GM12878 (cell line): ENCODE measurements at regions of chr5 and their contacts with region 1.

Region 1: GRCh38 chr5:109688971-109689739 is 572 bp upstream of the MAN2A1 start:
- DNase-seq: peak; percentile 62
- ATAC-seq: peak; percentile 85
- H3K4me3 ChIP-seq: peak overlapping the region; percentile 86
- H3K27ac ChIP-seq: peak overlapping the region; percentile 76
- H3K4me1 ChIP-seq: peaks cover 18% of the 10 kb centered on the region
- H3K27me3 ChIP-seq: no peaks in the 10 kb centered on the region
- CTCF ChIP-seq: peak in 1 of 3 experiments; percentile 7; a peak in 1 of 6 replicates
- EP300 ChIP-seq: no peak
- POLR2A ChIP-seq: peak; percentile 83
- RAD21 ChIP-seq: no peak

Region 2: DNA sequence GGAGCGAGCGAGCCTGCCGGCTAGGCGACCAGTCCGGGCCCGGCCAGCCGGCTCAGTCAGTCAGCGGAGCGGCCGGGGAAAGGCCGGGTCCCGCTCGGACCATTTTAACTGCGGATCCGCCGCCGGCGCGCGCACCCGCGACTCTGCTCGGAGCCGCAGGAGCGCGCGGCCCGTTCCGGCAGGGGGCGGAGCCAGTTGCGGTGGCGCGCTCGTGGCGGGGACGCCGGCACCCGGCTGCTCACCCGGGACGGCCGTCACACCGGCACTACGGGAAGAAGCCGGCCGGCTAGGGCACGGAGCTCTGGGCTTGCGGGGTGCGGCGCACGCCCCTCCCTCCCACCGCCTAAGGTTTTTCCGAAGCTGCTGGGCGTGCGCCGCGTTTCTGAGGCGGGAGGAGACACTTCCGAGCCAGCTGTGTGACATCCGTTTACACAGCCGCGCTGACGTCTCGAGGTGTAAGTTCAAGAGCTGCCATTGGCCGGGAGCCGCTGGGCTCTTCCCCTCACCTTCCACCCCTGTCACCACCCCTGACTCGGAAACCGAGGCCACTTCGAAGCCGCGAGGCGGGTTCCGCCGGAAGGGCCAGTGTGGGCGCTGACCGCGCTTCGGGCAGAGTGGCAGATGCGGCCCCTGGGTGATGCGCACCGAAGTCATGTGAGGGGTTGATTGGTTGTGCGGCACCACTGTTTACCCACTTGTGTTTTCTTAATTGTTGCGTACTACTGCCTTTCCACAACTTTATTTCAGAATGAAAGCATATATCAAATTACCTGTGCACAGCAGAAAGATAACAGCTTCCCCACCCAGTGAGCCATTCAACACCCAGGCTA is 1307.0 kb before region 1 on chr5 and contains the start of gene FBXL17:
- CTCF ChIA-PET with region 1: no interaction called
- POLR2A ChIA-PET with region 1: interaction called, 3 read pairs
- RAD21 ChIA-PET with region 1: no interaction called
- SMC1A ChIA-PET with region 1: interaction called, 3 read pairs
- in situ Hi-C with region 1: no loop called
- intact Hi-C with region 1: loop called (anchors 10 kb)
- DNase-seq: peak; percentile 73
- ATAC-seq: peak; percentile 82
- H3K4me3 ChIP-seq: peak within 1 kb of the TSS; percentile 76
- H3K27ac ChIP-seq: peak within 1 kb of the TSS; percentile 94
- H3K4me1 ChIP-seq: 0 out of 2 replicates have a peak, but pooled peaks cover 2% of the 10 kb centered on the region
- H3K27me3 ChIP-seq: no peaks in the 10 kb centered on the region
- CTCF ChIP-seq: no peak
- EP300 ChIP-seq: peak; percentile 28 to 54; a peak in 1 of 4 replicates
- POLR2A ChIP-seq: peak; percentile 91
- RAD21 ChIP-seq: no peak
- polyA plus RNA-seq, gene FBXL17: 0.88 to 2.1 TPM

Region 3: DNA sequence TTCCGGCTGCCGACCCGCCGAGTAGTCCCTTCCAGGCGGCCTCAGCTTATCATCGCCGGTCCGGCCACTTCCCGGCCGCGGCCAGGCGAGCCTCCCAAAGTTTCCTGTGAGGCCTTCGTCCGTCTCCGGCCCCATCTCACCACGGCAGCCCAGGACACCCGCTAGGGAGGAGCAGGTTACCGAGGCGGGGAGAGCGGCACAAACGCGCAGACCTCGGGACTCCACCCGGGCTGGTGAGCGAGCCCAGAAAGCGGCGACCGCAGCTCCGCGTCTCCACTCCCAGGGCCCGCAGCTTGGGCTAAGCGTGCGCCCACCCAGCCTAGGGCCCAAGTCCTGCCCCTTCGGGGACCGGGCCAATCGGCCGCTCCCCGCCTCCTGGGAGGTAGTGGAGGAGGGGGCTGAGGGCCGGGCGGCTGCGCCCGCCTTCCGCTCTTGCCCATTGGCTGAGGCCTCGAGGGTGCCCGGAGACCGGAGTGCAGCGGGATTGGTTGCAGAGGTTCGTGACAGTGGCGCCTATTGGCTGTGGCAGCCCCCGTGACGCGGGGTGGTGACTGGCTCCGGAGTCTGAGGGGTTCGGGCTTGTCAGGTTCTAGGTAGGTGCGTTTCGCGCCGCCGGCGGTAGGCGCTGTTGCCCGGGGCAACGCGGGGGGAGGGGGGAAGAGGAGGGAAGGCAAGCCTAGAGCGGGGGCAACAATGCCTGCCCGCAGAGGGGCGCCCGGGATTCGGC is 940.6 kb before region 1 on chr5:
- CTCF ChIA-PET with region 1: no interaction called
- POLR2A ChIA-PET with region 1: no interaction called
- RAD21 ChIA-PET with region 1: no interaction called
- SMC1A ChIA-PET with region 1: no interaction called
- in situ Hi-C with region 1: no loop called
- intact Hi-C with region 1: loop called (anchors 5 kb)
- DNase-seq: peak; percentile 97
- ATAC-seq: peak; percentile 94
- H3K4me3 ChIP-seq: peak overlapping the region; percentile 93
- H3K27ac ChIP-seq: peak overlapping the region; percentile 90
- H3K4me1 ChIP-seq: no peaks in the 10 kb centered on the region
- H3K27me3 ChIP-seq: no peaks in the 10 kb centered on the region
- CTCF ChIP-seq: peak in 1 of 3 experiments; percentile 14; a peak in 1 of 6 replicates
- EP300 ChIP-seq: no peak
- POLR2A ChIP-seq: peak; percentile 99
- RAD21 ChIP-seq: peak; percentile 31; the same call in 1 of the 2 replicates

Region 4: DNA sequence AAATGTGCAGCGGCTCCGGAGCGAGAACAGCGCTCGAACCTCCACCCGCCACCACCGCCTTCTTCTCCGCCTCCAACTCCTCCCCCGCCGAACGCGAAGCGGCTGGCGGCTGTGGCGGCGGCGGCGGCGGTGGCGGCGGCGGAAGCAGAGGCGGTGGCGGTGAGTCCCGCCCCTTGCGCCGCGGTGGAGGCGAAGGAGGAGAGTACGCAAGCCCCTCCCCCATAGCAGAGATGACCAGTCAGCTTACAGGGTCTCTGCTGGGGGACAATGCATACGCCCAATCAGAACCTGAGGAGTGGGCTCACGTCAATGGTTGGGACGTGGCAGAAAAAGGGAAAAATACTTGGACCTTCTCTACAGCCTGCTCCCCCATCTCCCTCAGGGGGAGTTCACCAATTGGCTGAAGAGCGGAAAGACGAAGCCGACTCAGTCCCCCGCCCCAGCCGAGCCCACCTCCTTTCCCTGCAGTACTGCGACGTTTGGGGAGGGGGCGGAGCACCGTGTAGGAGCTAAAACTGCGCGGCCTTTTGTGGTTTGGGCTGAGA is 279.2 kb before region 1 on chr5 and contains the start of gene PJA2:
- CTCF ChIA-PET with region 1: interaction called, 3 read pairs
- POLR2A ChIA-PET with region 1: no interaction called
- RAD21 ChIA-PET with region 1: no interaction called
- SMC1A ChIA-PET with region 1: no interaction called
- in situ Hi-C with region 1: no loop called
- intact Hi-C with region 1: loop called (anchors 2 kb)
- DNase-seq: peak; percentile 99
- ATAC-seq: peak; percentile 84
- H3K4me3 ChIP-seq: peak within 1 kb of the TSS; percentile 92
- H3K27ac ChIP-seq: peak within 1 kb of the TSS; percentile 98
- H3K4me1 ChIP-seq: peaks cover 10% of the 10 kb centered on the region; the same call in 1 of the 2 replicates
- H3K27me3 ChIP-seq: no peaks in the 10 kb centered on the region
- CTCF ChIP-seq: no peak
- EP300 ChIP-seq: peak in 1 of 2 experiments; percentile 60; a peak in 2 of 4 replicates
- POLR2A ChIP-seq: no peak
- RAD21 ChIP-seq: no peak
- polyA plus RNA-seq, gene PJA2: 27.8 to 28.2 TPM

Region 5: DNA sequence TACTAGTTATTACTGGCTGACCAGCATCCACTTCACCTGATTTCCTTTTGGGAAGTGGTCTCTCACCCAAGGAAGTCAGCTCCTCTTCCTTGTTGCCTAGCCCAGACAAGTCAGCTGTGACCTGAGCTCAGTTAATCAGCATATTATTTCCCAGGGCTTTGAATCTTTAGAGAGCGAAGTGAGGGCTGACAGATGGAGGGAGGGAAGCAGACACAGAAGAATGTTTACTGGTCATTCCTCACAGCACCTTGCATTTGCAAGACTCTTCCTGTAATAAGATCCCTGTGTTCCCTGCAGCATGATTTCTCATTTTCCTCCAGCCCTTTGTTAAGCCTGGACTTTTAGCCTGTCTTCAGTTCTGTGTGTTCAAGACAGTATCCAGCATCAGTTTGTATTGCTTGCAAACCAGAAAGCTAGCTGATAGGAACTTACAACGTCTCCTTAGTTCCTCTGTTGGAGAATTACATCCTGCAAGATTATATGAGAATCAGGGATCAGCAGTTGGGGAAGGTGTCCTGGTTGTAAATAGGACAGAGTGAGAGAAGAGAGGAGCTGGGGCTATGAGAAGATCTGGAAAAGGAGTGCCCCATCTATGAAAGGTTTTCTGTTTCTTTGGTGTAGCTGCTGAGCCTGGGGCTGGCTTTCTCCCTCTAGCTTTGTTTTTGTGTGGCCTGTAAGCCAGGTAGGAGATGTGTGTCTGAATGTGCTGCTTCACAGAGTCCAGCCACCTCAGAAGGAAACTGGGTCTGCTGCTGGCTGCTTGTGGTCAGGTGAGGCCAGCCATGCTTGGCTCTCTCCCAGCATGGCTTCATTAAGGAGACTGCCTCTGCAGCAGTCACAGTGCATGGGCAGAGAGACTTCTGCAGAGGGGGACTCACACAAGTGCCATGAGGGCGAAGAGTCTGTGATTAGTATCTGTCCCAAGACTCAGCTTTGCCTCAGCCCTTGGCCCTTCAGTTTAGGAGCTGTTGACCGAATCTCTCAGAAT is 50.9 kb after region 1 on chr5:
- CTCF ChIA-PET with region 1: interaction called, 6 read pairs
- POLR2A ChIA-PET with region 1: interaction called, 3 read pairs
- RAD21 ChIA-PET with region 1: interaction called, 4 read pairs
- SMC1A ChIA-PET with region 1: interaction called, 6 read pairs
- in situ Hi-C with region 1: no loop called
- intact Hi-C with region 1: loop called (anchors 5 kb)
- DNase-seq: peak; percentile 32
- ATAC-seq: peak; percentile 97
- H3K4me3 ChIP-seq: no peak overlapping the region; the same call in 1 of the 2 replicates
- H3K27ac ChIP-seq: no peak overlapping the region
- H3K4me1 ChIP-seq: peaks cover 11% of the 10 kb centered on the region
- H3K27me3 ChIP-seq: no peaks in the 10 kb centered on the region
- CTCF ChIP-seq: no peak
- EP300 ChIP-seq: no peak
- POLR2A ChIP-seq: no peak
- RAD21 ChIP-seq: no peak

Region 6: GRCh38 chr5:110751902-110752762 is 1063.0 kb after region 1 on chr5:
- CTCF ChIA-PET with region 1: no interaction called
- POLR2A ChIA-PET with region 1: no interaction called
- RAD21 ChIA-PET with region 1: no interaction called
- SMC1A ChIA-PET with region 1: no interaction called
- in situ Hi-C with region 1: no loop called
- intact Hi-C with region 1: loop called (anchors 5 kb)
- DNase-seq: peak; percentile 96
- ATAC-seq: peak; percentile 94
- H3K4me3 ChIP-seq: peak overlapping the region; percentile 46; the same call in 1 of the 2 replicates
- H3K27ac ChIP-seq: peak overlapping the region; percentile 96
- H3K4me1 ChIP-seq: peaks cover 30% of the 10 kb centered on the region
- H3K27me3 ChIP-seq: no peaks in the 10 kb centered on the region
- CTCF ChIP-seq: no peak
- EP300 ChIP-seq: peak; percentile 94 to 99
- POLR2A ChIP-seq: peak; percentile 57
- RAD21 ChIP-seq: no peak